Motor neuron (in vitro differentiated cells): ENCODE measurements at regions of chr3 and their contacts with region 1.

Region 1: DNA sequence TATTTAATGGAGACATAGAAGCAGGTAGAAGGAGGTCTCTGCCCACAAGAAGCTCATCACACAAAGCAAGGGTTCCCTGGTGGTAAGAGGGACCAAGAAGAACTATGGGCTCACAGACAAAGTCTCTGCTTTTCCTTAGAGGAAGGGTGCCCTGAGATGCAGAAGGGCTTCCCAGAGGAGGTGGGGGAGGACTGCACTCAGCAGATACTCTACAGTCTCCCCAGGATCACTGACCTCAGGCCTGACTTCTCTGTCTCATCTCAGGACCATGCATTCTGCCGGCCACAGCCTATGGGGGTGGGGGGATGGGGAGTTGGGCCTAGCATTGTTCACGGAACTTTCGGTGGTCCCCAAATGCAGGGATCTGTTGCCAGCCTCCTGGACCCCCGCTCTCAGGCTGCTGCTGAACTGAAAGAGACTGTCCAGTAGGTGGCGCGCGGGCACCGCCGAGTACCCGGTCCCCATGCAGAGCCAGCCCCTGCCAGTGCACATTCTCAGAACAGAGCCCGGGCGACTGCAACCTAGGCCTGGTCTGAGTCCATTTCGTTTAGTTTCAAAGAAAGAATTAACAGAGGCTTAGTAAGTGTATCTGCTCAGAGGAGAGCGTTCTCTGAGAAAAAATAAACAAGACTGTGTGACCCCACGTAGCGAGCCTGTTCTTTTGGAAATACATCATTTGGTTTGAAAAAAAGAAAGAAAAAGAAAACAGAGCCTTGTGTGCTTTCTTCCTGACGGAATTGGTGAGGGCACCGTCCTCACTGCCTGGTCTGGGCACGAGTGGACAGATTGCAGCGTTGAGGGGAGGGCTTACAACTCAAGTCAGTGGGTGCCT is 74.1 kb downstream of the LRTM1 start:
- ATAC-seq: peak; percentile 89 to 98 (median 95)
- H3K4me3 ChIP-seq: no peak overlapping the region
- H3K27ac ChIP-seq: no peak overlapping the region
- H3K4me1 ChIP-seq: peaks cover 13 to 22% of the 10 kb centered on the region in 2 donors

Region 2: DNA sequence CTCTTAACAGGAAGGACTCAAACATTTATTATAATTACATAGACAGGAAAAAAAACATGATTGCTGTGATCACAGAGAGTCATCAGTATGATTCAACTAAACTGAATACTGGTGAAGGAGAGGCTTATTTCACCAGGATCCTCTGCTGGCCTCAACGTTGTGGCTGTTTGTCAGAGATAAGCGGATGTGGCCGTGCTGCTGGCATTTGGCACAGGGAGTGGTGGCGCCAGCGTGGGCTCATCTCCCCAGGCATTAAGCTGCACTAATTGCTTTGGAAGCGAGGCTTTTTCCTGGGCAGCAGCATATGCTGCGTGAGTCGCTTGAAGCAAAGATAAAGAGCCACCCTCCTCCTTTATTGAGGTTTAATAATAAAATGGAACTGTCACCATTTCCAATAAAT is 232.6 kb before region 1 on chr3:
- in situ Hi-C with region 1: no loop called
- ATAC-seq: peak in 3 of 8 experiments; percentile 19 to 63 (median 29)
- H3K4me3 ChIP-seq: no peak overlapping the region
- H3K27ac ChIP-seq: no peak overlapping the region
- H3K4me1 ChIP-seq: peaks cover 12 to 20% of the 10 kb centered on the region in 2 donors

Region 3: GRCh38 chr3:55180936-55181535 is 327.2 kb after region 1 on chr3:
- in situ Hi-C with region 1: loop called in 1 of 9 experiments (anchors 25 kb)
- ATAC-seq: no peak
- H3K4me3 ChIP-seq: no peak overlapping the region
- H3K27ac ChIP-seq: no peak overlapping the region
- H3K4me1 ChIP-seq: no peaks in the 10 kb centered on the region

Region 4: DNA sequence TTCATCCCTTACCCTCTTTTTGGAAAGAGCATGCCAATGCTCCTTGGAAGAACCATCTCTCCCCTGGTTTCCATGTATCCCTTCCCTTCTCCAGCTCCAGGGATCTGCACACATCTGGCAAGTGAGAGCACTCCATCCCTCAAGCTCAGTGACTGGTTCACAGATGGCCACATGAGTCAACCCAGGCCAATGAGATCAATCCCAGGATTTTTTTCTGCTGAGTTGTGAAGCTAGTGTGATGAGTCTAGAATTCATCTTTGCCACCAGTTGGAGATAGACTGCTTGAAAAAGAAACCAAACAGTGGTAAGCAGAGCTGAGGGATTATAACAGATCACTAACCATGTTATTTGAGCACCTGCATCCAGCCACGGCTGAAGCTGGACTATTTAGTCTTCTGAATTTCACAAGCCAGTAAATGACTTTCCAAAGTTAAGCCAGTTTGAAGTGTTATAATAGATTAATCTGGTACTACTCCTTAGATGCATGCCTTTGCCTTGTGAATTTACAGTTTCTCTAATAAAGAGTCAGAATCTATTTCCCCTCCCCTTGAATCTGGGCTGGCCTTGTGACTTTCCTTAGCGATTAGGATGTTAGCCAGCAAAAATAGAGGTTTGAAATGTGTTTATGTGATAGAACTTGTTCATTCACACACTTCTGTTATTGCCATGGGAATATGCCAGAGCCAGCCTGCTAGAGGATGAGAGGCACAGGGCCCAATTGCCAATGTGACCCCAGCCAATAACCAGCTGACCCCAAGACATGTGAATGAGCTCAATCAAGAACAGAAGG is 473.5 kb after region 1 on chr3:
- in situ Hi-C with region 1: no loop called
- ATAC-seq: peak in 1 of 8 experiments; percentile 9
- H3K4me3 ChIP-seq: no peak overlapping the region
- H3K27ac ChIP-seq: no peak overlapping the region
- H3K4me1 ChIP-seq: peaks cover 0 to 3% of the 10 kb centered on the region in 2 donors

Region 5: DNA sequence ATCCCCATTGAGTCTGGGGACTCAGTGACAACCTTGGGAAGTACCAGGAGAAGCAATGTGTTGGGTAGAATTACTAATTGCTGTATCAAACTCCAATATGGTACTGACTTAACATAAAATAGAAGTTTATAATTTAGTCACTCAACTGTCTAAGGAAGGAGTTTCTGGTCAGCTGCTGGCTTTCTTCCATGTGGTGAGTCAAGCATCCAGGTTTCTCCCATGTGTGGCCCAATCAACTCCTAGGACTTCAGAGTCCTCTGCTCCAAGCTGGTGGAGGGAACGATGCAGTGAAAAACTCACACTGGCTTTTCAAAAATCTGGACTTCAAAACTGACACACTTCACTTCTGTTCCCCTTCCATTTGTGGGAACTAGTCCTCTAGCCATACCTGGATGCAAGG is 608.1 kb after region 1 on chr3:
- in situ Hi-C with region 1: loop called in 1 of 9 experiments (anchors 25 kb)
- ATAC-seq: peak in 2 of 8 experiments; percentile 63 to 66
- H3K4me3 ChIP-seq: no peak overlapping the region
- H3K27ac ChIP-seq: no peak overlapping the region
- H3K4me1 ChIP-seq: no peaks in the 10 kb centered on the region

Region 6: GRCh38 chr3:55746808-55747413 is 893.1 kb after region 1 on chr3:
- in situ Hi-C with region 1: loop called in 1 of 9 experiments (anchors 25 kb)
- ATAC-seq: no peak
- H3K4me3 ChIP-seq: no peak overlapping the region
- H3K27ac ChIP-seq: no peak overlapping the region
- H3K4me1 ChIP-seq: peaks cover 0 to 5% of the 10 kb centered on the region in 2 donors

Region 7: DNA sequence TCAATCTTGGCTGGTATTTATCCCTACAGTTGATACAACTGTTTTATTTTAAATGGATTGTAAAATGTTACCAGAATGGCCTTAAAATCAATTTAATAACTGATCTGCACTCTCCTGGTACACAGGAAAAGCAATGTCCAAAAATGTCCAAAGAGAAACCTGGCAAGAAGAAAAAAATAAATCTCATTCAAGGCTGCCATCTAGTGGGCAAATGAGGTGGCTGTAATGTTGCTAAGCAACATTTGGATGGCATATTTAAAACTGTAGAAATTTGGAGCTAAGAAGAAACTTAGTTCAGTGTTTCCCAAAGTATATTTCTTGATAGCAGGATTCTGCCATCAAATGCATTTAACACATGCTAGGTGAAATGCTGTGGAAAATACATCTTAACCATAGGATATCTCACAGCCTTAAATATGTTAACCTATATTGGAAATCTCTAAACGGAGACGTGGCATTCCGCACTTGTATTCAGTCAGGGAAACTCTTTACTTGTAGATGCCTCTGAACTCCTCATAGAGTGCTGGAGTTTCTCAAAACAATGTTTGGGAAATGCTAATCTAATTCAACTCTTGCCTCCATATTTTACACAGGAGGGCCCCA is 1397.7 kb after region 1 on chr3:
- in situ Hi-C with region 1: loop called in 1 of 9 experiments (anchors 25 kb)
- ATAC-seq: peak in 6 of 8 experiments; percentile 23 to 73 (median 52)
- H3K4me3 ChIP-seq: no peak overlapping the region
- H3K27ac ChIP-seq: no peak overlapping the region
- H3K4me1 ChIP-seq: no peaks in the 10 kb centered on the region